Tibial artery (tissue), 4 donors: ENCODE measurements at regions of chr10 and their contacts with region 1.

Region 1: GRCh38 chr10:44974628-44975431 is 3.8 kb downstream of the DEPP1 start:
- DNase-seq: peak; percentile 84 to 90
- H3K4me3 ChIP-seq: peak overlapping the region; percentile 72 to 85
- H3K27ac ChIP-seq: peak overlapping the region; percentile 90 to 96
- H3K4me1 ChIP-seq: peaks cover 0 to 53% (median 35%) of the 10 kb centered on the region in 4 donors
- H3K27me3 ChIP-seq: no peaks in the 10 kb centered on the region
- CTCF ChIP-seq: peak; percentile 96 to 99

Region 2: DNA sequence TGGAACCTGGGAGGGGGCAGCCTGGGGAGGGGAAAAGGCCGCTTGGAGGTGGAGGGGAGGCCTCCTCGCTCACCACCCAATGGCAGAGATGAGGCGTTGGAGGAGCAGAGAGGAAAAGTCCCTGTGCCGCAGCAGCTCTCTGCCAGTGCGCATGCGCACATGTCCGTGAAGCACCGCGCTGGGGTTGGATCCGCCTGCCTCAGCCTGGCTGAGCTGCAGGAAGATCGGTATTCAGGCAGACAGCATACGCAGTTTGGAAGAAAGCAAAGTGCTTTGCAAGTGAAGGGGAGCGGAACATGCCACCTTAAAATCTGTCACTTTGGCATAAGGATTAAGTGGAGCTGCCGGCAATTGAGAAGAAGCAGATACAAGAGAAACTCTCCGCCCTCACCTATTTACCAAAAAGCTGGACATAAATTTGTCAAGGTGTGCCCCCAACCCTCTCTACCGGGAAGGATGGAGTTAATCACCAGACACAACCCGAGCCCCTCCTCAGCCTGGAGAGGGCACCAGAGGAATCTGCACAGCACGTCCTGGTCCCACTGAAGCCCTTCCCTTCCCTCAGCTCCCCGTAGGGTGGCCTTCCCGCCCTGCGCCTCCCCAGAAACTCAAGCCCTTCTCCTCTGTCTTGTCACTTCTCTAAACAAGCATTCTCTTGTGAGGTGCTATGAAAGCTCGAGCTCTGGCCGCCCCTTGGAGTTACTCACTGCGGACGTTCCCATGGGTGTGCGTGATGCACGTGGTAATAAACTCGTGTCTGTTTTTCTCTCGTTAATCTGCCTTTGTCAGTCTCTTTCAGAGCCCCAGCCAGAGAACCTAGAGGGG is 95.9 kb before region 1 on chr10:
- intact Hi-C with region 1: loop called (anchors 10 kb)
- DNase-seq: peak; percentile 81 to 93
- H3K4me3 ChIP-seq: peak overlapping the region; percentile 49 to 51
- H3K27ac ChIP-seq: peak overlapping the region; percentile 22 to 67
- H3K4me1 ChIP-seq: peaks cover 0 to 31% (median 20%) of the 10 kb centered on the region in 4 donors
- H3K27me3 ChIP-seq: no peaks in the 10 kb centered on the region
- CTCF ChIP-seq: no peak

Region 3: GRCh38 chr10:44932517-44933450 is 42.0 kb before region 1 on chr10:
- intact Hi-C with region 1: loop called (anchors 1 kb)
- DNase-seq: peak; percentile 92 to 94
- H3K4me3 ChIP-seq: no peak overlapping the region
- H3K27ac ChIP-seq: peak overlapping the region; percentile 1 to 8
- H3K4me1 ChIP-seq: peaks cover 0 to 34% (median 22%) of the 10 kb centered on the region in 4 donors
- H3K27me3 ChIP-seq: no peaks in the 10 kb centered on the region
- CTCF ChIP-seq: peak; percentile 94 to 98

Region 4: GRCh38 chr10:44959247-44960087 is 15.4 kb before region 1 on chr10 and contains the start of gene RASSF4:
- intact Hi-C with region 1: loop called (anchors 2 kb)
- DNase-seq: peak; percentile 89 to 97
- H3K4me3 ChIP-seq: peak within 1 kb of the TSS; percentile 66 to 80
- H3K27ac ChIP-seq: peak within 1 kb of the TSS; percentile 80 to 82
- H3K4me1 ChIP-seq: peaks cover 0 to 62% (median 43%) of the 10 kb centered on the region in 4 donors
- H3K27me3 ChIP-seq: no peaks in the 10 kb centered on the region
- CTCF ChIP-seq: no peak